ENCODE measurements at regions of chr5 and their contacts with region 1.

Region 1: DNA sequence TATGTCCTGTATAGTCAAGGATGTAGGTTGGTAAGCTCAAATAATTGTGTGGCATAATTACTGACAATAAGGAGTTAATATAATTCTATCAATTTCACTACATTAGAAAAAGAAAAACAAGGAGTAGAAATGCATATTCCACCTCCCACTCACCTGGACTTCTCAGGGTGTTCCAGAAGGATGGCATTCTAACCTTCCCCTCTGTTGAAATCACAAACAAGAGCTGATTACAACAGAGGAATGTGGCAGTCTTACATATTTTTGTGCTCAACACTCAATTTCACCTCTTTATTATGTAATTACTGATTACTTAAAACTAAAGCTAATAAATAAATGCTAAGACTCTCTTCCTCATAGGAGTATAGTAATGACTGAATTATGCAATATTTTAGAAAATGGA is 745.3 kb downstream of the DTWD2 start:
- DNase-seq: no peak

Region 2: DNA sequence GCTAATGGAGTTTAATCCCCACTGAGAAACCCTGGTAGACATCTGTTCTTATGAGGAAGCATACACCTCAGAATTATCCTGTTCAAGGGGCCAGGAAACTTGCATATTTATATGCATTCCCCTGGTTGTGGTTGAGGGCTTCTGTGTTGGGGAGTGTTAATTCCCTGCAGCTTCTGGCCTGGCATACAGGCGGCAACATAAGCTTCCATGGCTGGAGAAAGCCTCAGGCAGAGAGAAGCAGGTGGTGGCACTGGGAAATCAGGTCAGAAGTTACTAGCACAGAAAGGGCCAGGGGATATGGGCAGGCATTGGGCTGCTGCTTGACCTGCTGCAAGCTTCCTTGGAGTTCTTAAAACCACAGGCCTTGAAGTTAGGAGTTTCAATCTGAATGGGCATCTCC is 1502.3 kb before region 1 on chr5:
- intact Hi-C with region 1: loop called in 1 of 2 experiments (anchors 5 kb)
- DNase-seq: no peak

Region 3: GRCh38 chr5:118301696-118302095 is 58.6 kb after region 1 on chr5:
- intact Hi-C with region 1: no loop called
- DNase-seq: no peak

Measured in posterior vena cava (tissue), 2 donors.